ENCODE measurements at regions of chr12 and their contacts with region 1.

Region 1: GRCh38 chr12:65565601-65566560 is 258.4 kb upstream of the HMGA2 start:
- DNase-seq: no peak

Region 2: DNA sequence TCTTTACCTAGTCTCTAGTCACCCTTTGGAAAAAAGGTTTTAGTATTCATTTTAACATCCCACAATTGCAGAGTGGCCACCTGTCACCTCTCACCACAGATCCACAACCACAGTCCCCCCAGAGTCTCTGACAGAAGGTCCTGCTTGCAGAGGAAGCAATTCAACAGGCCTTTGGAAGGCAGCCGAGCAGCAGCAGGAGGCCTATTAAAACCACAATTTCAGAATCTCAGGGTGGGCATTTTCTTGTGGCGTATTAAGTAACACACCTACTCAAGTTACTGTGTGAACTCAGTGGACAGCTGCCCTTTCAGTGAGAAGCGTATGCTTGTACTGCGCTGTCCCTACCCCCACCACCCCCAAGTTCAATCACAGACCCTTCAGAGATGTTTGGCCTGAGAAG is 24.4 kb after region 1 on chr12:
- CTCF ChIA-PET with region 1: no interaction called
- POLR2A ChIA-PET with region 1: no interaction called
- DNase-seq: peak; percentile 38

Region 3: GRCh38 chr12:65602610-65603295 is 36.9 kb after region 1 on chr12:
- CTCF ChIA-PET with region 1: interaction called, 13 read pairs
- POLR2A ChIA-PET with region 1: no interaction called
- DNase-seq: peak; percentile 80